Activated naive CD4-positive, alpha-beta T cell treated with anti-CD3 and anti-CD28 coated beads for 36 hours (primary cell): ENCODE measurements at regions of chrX and their contacts with region 1.

Region 1: GRCh38 chrX:47144626-47145394 is at the starts of genes NDUFB11 and RBM10:
- DNase-seq: peak; percentile 94
- H3K4me3 Mint-ChIP-seq: peak within 1 kb of the TSS; percentile 97
- H3K27ac Mint-ChIP-seq: peak within 1 kb of the TSS; percentile 99
- H3K4me1 Mint-ChIP-seq: peaks cover 35% of the 10 kb centered on the region
- H3K27me3 Mint-ChIP-seq: no peaks in the 10 kb centered on the region
- total RNA-seq, gene NDUFB11: 85.8 to 87.2 TPM
- total RNA-seq, gene RBM10: 65.4 to 65.5 TPM

Region 2: GRCh38 chrX:46836701-46837557 is 307.9 kb before region 1 on chrX and contains the start of gene RP2:
- CTCF ChIA-PET with region 1: no interaction called
- intact Hi-C with region 1: loop called (anchors 2 kb)
- DNase-seq: peak; percentile 89
- H3K4me3 Mint-ChIP-seq: peak within 1 kb of the TSS; percentile 91
- H3K27ac Mint-ChIP-seq: peak within 1 kb of the TSS; percentile 84
- H3K4me1 Mint-ChIP-seq: peaks cover 2% of the 10 kb centered on the region
- H3K27me3 Mint-ChIP-seq: no peaks in the 10 kb centered on the region
- total RNA-seq, gene RP2: 4.0 to 4.2 TPM

Region 3: DNA sequence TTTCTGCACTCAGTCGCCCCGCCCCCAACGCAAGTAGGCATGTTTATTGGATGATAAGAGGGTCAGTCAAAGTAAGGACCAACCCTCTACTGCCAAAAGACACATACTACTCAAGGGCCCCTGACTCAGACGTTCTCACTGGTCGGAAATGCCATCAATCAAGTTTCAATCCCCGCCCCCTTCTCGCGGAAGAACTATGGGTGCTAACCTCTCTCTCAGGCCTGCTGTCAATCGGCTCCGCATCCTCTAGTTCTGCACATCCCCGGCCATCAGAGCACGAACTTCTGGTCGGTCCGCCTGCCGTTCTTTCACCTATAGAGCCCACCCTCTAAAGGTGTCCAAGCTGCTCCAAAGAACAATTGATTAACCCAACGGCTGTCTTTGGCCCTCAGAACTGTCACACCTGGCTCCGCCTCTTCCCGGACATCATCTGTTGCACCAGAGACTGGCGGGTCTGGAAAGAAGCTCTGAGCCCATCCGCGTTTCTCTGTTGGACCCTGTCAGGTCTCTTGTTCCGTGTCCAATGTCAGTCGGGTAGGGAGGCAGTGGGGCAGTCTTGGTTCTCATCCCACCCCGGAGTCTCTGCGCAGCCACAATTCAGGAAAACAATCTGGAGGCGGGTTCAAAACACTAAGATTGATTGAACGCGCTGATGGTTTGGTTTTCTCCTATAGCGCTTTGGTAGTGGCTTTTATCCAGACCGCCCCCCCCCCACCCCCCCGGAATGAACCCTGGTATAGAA is 15.5 kb before region 1 on chrX:
- CTCF ChIA-PET with region 1: interaction called, 6 read pairs
- intact Hi-C with region 1: loop called (anchors 1 kb)
- DNase-seq: peak; percentile 95
- H3K4me3 Mint-ChIP-seq: peak overlapping the region; percentile 99
- H3K27ac Mint-ChIP-seq: peak overlapping the region; percentile 98
- H3K4me1 Mint-ChIP-seq: peaks cover 5% of the 10 kb centered on the region
- H3K27me3 Mint-ChIP-seq: no peaks in the 10 kb centered on the region

Region 4: DNA sequence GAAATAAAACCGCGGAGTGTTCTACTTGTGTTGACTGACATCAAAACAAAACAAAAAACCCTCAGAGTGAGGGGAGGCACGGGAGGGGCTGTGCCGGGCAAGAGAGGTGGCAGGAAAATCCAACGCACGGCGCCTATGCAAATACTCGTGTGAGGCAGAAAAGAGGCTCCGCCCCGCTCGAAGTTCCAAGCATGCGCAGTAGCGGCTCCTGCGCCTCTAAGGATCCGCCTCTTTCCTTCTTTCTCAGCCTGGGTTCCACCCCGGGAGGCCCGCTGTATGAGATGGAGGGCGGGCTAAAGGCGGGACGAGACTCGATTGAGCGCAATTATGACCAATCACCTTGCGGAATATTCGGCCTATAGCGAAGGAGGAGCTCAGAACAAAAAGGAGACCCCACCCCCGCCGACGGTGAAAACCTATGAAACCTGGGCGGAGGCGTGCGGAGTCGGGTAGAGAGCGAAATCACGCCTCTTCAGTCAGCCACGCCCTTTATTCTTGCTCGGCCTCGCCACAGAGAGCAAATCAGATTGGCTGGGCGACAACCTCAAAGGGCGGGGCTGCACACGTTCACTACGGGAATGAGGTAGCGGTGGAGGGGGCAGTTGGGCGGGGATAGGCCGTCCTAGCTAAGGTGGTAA is 73.0 kb after region 1 on chrX:
- CTCF ChIA-PET with region 1: interaction called, 4 read pairs
- intact Hi-C with region 1: loop called (anchors 2 kb)
- DNase-seq: peak; percentile 98
- H3K4me3 Mint-ChIP-seq: peak overlapping the region; percentile 80
- H3K27ac Mint-ChIP-seq: peak overlapping the region; percentile 98
- H3K4me1 Mint-ChIP-seq: peaks cover 37% of the 10 kb centered on the region
- H3K27me3 Mint-ChIP-seq: no peaks in the 10 kb centered on the region

Region 5: GRCh38 chrX:47384502-47384901 is 239.7 kb after region 1 on chrX:
- CTCF ChIA-PET with region 1: no interaction called
- intact Hi-C with region 1: loop called (anchors 5 kb)
- DNase-seq: peak; percentile 79
- H3K4me3 Mint-ChIP-seq: no peak overlapping the region
- H3K27ac Mint-ChIP-seq: no peak overlapping the region
- H3K4me1 Mint-ChIP-seq: peaks cover 25% of the 10 kb centered on the region
- H3K27me3 Mint-ChIP-seq: no peaks in the 10 kb centered on the region

Region 6: GRCh38 chrX:47658684-47659515 is 514.1 kb after region 1 on chrX and contains the start of gene UXT:
- CTCF ChIA-PET with region 1: no interaction called
- intact Hi-C with region 1: loop called (anchors 2 kb)
- DNase-seq: peak; percentile 96
- H3K4me3 Mint-ChIP-seq: peak within 1 kb of the TSS; percentile 88
- H3K27ac Mint-ChIP-seq: peak within 1 kb of the TSS; percentile 98
- H3K4me1 Mint-ChIP-seq: peaks cover 46% of the 10 kb centered on the region
- H3K27me3 Mint-ChIP-seq: no peaks in the 10 kb centered on the region
- total RNA-seq, gene UXT: 192 to 198 TPM